Activated CD4-positive, alpha-beta T cell treated with anti-CD3 and anti-CD28 coated beads for 36 hours (primary cell): ENCODE measurements at regions of chr11 and their contacts with region 1.

Region 1: DNA sequence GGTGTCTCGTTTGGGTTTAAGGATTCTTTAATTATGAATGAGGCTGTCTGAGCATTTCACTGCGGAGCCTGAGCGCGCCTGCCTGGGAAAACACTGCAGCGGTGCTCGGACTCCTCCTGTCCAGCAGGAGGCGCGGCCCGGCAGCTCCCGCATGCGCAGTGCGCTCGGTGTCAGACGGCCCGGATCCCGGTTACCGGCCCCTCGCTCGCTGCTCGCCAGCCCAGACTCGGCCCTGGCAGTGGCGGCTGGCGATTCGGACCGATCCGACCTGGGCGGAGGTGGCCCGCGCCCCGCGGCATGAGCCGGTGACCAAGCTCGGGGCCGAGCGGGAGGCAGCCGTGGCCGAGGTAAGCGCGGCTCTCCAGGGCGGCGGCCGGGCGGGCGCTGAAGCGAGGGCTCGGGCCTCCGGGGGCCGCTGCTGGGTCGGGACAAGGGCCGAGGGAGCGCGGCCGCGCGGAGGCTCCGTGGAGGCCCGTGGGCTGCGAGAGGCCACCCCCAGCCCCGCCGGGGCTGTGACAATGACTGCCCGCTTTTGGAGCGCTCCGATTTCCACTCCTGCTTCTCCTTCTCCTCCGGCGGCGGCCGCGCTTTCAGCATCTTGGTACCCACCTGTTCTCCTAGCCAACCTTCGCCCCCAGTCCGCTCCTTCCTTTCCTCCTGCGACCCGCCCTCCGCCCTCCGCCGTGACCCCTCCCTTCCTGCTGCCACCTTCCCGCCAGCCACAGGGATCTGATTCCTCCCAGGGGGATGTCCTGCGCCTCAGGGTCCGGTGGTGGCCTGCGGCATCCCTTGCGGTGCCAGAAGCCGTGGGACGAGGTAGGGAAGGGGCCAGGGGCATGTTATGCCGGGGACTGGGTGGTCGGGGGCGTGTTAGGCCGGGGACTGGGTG is at the start of gene EXT2:
- DNase-seq: peak; percentile 92
- ATAC-seq: peak; percentile 97
- H3K4me3 Mint-ChIP-seq: peak within 1 kb of the TSS; percentile 79
- H3K27ac Mint-ChIP-seq: no peak within 1 kb of the TSS
- H3K4me1 Mint-ChIP-seq: peaks cover 25% of the 10 kb centered on the region
- H3K27me3 Mint-ChIP-seq: no peaks in the 10 kb centered on the region
- total RNA-seq, gene EXT2: 18.4 to 20.6 TPM

Region 2: GRCh38 chr11:43992834-43993637 is 102.7 kb before region 1 on chr11:
- CTCF ChIA-PET with region 1: no interaction called
- POLR2A ChIA-PET with region 1: no interaction called
- intact Hi-C with region 1: no loop called
- DNase-seq: peak; percentile 18
- ATAC-seq: no peak
- H3K4me3 Mint-ChIP-seq: no peak overlapping the region
- H3K27ac Mint-ChIP-seq: no peak overlapping the region
- H3K4me1 Mint-ChIP-seq: peaks cover 2% of the 10 kb centered on the region
- H3K27me3 Mint-ChIP-seq: no peaks in the 10 kb centered on the region

Region 3: GRCh38 chr11:44065841-44066731 is 29.7 kb before region 1 on chr11 and contains the start of gene ACCS:
- CTCF ChIA-PET with region 1: interaction called, 74 read pairs
- POLR2A ChIA-PET with region 1: no interaction called
- intact Hi-C with region 1: loop called (anchors 1 to 2 kb)
- DNase-seq: peak; percentile 91
- ATAC-seq: peak; percentile 95
- H3K4me3 Mint-ChIP-seq: peak within 1 kb of the TSS; percentile 79
- H3K27ac Mint-ChIP-seq: peak within 1 kb of the TSS; percentile 90
- H3K4me1 Mint-ChIP-seq: peaks cover 22% of the 10 kb centered on the region
- H3K27me3 Mint-ChIP-seq: no peaks in the 10 kb centered on the region
- total RNA-seq, gene ACCS: 6.6 to 7.2 TPM

Region 4: GRCh38 chr11:44083906-44084305 is 11.8 kb before region 1 on chr11:
- CTCF ChIA-PET with region 1: interaction called, 22 read pairs
- POLR2A ChIA-PET with region 1: no interaction called
- intact Hi-C with region 1: no loop called
- DNase-seq: no peak
- ATAC-seq: no peak
- H3K4me3 Mint-ChIP-seq: no peak overlapping the region
- H3K27ac Mint-ChIP-seq: no peak overlapping the region
- H3K4me1 Mint-ChIP-seq: no peaks in the 10 kb centered on the region
- H3K27me3 Mint-ChIP-seq: no peaks in the 10 kb centered on the region

Region 5: DNA sequence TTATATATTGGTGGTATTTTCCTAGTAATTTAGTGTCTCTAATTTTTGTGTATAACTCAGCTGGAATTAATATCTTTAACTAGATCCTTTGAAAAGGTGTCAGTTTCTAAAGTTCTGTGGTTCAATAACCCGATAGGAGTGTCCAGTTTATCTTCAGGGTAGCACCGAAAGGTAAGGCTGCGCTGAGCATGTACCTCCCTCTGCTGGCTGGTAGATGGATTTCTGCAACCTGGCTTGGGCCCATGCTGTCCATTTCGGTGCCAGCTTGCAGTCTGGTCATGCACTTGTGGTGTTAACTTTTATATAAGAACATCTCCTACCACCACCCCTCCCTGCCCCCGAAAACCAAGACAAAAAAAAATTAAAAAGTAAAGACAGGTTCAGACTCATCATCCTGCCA is 24.4 kb after region 1 on chr11:
- CTCF ChIA-PET with region 1: interaction called, 11 read pairs
- POLR2A ChIA-PET with region 1: no interaction called
- intact Hi-C with region 1: no loop called
- DNase-seq: peak; percentile 13
- ATAC-seq: no peak
- H3K4me3 Mint-ChIP-seq: no peak overlapping the region
- H3K27ac Mint-ChIP-seq: no peak overlapping the region
- H3K4me1 Mint-ChIP-seq: no peaks in the 10 kb centered on the region
- H3K27me3 Mint-ChIP-seq: no peaks in the 10 kb centered on the region

Region 6: DNA sequence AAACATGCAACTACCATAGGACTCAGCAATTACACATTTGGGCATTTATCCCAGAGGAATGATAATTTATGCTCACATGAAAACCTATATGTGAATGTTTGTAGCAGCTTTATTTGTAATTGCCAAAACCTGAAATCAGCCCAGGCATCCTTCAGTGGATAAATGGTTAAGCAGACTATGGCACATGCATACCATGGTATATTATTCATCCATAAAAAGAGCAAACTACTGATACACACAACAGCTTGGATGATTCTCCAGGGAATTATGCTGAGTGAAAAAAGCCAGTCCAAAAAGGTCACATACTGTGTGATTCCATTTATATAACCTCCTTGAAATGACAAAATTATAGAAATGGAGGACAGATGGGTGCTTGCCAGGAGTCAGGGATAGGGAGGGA is 127.5 kb after region 1 on chr11:
- CTCF ChIA-PET with region 1: no interaction called
- POLR2A ChIA-PET with region 1: no interaction called
- intact Hi-C with region 1: loop called in 1 of 2 experiments (anchors 10 kb)
- DNase-seq: no peak
- ATAC-seq: no peak
- H3K4me3 Mint-ChIP-seq: no peak overlapping the region
- H3K27ac Mint-ChIP-seq: no peak overlapping the region
- H3K4me1 Mint-ChIP-seq: no peaks in the 10 kb centered on the region
- H3K27me3 Mint-ChIP-seq: no peaks in the 10 kb centered on the region

Region 7: GRCh38 chr11:44538375-44539054 is 442.8 kb after region 1 on chr11:
- CTCF ChIA-PET with region 1: interaction called, 4 read pairs
- POLR2A ChIA-PET with region 1: no interaction called
- intact Hi-C with region 1: loop called (anchors 1 kb)
- DNase-seq: peak; percentile 84
- ATAC-seq: peak; percentile 95
- H3K4me3 Mint-ChIP-seq: no peak overlapping the region
- H3K27ac Mint-ChIP-seq: no peak overlapping the region
- H3K4me1 Mint-ChIP-seq: no peaks in the 10 kb centered on the region
- H3K27me3 Mint-ChIP-seq: no peaks in the 10 kb centered on the region